ENCODE measurements at regions of chr12 and their contacts with region 1.

Region 1: GRCh38 chr12:47837190-47838171 is 17.8 kb upstream of the HDAC7 start:
- DNase-seq: peak; percentile 70 to 86
- H3K4me3 ChIP-seq: no peak overlapping the region
- H3K4me3 Mint-ChIP-seq: no peak overlapping the region
- H3K27ac Mint-ChIP-seq: no peak overlapping the region
- H3K4me1 ChIP-seq: peaks cover 5% of the 10 kb centered on the region; the same call in 1 of the 2 replicates
- H3K4me1 Mint-ChIP-seq: peaks cover 14% of the 10 kb centered on the region
- H3K27me3 ChIP-seq: no peaks in the 10 kb centered on the region
- H3K27me3 Mint-ChIP-seq: no peaks in the 10 kb centered on the region
- CTCF ChIP-seq: peak; percentile 93 to 96

Region 2: GRCh38 chr12:47715393-47715876 is 122.0 kb before region 1 on chr12:
- CTCF ChIA-PET with region 1: interaction called, 23 read pairs
- POLR2A ChIA-PET with region 1: no interaction called
- intact Hi-C with region 1: loop called (anchors 1 kb)
- DNase-seq: peak; percentile 79 to 81
- H3K4me3 ChIP-seq: no peak overlapping the region
- H3K4me3 Mint-ChIP-seq: no peak overlapping the region
- H3K27ac Mint-ChIP-seq: no peak overlapping the region
- H3K4me1 ChIP-seq: no peaks in the 10 kb centered on the region
- H3K4me1 Mint-ChIP-seq: no peaks in the 10 kb centered on the region
- H3K27me3 ChIP-seq: no peaks in the 10 kb centered on the region
- H3K27me3 Mint-ChIP-seq: no peaks in the 10 kb centered on the region
- CTCF ChIP-seq: peak; percentile 88 to 92

Region 3: DNA sequence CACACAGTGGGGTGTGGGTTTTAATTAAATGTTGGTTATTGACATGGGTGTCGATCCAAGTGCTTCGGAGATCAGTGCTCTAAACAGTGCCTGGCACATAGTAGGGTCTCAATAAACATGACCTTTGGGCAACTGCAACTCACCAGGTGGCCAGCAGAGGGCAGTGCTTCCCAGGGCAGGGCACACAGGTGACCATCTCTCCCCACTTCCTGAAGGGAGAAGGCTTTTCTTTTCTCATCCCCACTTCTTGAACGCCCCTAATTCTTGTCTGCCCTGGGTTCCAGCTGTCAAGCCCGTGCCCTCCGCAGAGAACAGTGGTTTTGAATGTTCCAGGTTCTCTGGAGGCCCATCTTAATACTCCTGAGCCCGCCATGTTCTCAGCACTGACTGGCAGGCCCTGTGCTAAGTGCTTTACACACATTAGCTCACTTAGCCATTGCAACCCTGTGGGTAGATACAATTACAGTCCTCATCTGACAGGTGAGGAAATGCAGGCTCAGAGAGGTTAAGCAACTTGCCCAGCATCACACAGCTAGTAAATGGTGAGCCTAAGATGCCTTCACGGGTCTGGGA is 95.1 kb before region 1 on chr12:
- CTCF ChIA-PET with region 1: interaction called, 65 read pairs
- POLR2A ChIA-PET with region 1: no interaction called
- intact Hi-C with region 1: loop called (anchors 1 kb)
- DNase-seq: peak; percentile 74 to 86
- H3K4me3 ChIP-seq: no peak overlapping the region
- H3K4me3 Mint-ChIP-seq: no peak overlapping the region
- H3K27ac Mint-ChIP-seq: no peak overlapping the region
- H3K4me1 ChIP-seq: peaks cover 5% of the 10 kb centered on the region; the same call in 1 of the 2 replicates
- H3K4me1 Mint-ChIP-seq: peaks cover 18% of the 10 kb centered on the region
- H3K27me3 ChIP-seq: no peaks in the 10 kb centered on the region
- H3K27me3 Mint-ChIP-seq: no peaks in the 10 kb centered on the region
- CTCF ChIP-seq: peak; percentile 94 to 99

Region 4: GRCh38 chr12:47779301-47779942 is 58.1 kb before region 1 on chr12:
- CTCF ChIA-PET with region 1: interaction called, 13 read pairs
- POLR2A ChIA-PET with region 1: no interaction called
- intact Hi-C with region 1: loop called (anchors 1 kb)
- DNase-seq: peak; percentile 88 to 94
- H3K4me3 ChIP-seq: no peak overlapping the region
- H3K4me3 Mint-ChIP-seq: no peak overlapping the region
- H3K27ac Mint-ChIP-seq: peak overlapping the region; percentile 34
- H3K4me1 ChIP-seq: peaks cover 9% of the 10 kb centered on the region; the same call in 1 of the 2 replicates
- H3K4me1 Mint-ChIP-seq: peaks cover 19% of the 10 kb centered on the region
- H3K27me3 ChIP-seq: no peaks in the 10 kb centered on the region
- H3K27me3 Mint-ChIP-seq: no peaks in the 10 kb centered on the region
- CTCF ChIP-seq: peak; percentile 97 to 99

Region 5: GRCh38 chr12:47797441-47797840 is 40.0 kb before region 1 on chr12:
- CTCF ChIA-PET with region 1: interaction called, 101 read pairs
- POLR2A ChIA-PET with region 1: no interaction called
- intact Hi-C with region 1: loop called (anchors 1 kb)
- DNase-seq: peak in 1 of 2 experiments; percentile 66
- H3K4me3 ChIP-seq: no peak overlapping the region
- H3K4me3 Mint-ChIP-seq: no peak overlapping the region
- H3K27ac Mint-ChIP-seq: no peak overlapping the region
- H3K4me1 ChIP-seq: no peaks in the 10 kb centered on the region
- H3K4me1 Mint-ChIP-seq: no peaks in the 10 kb centered on the region
- H3K27me3 ChIP-seq: no peaks in the 10 kb centered on the region
- H3K27me3 Mint-ChIP-seq: no peaks in the 10 kb centered on the region
- CTCF ChIP-seq: peak; percentile 31 to 68

Region 6: DNA sequence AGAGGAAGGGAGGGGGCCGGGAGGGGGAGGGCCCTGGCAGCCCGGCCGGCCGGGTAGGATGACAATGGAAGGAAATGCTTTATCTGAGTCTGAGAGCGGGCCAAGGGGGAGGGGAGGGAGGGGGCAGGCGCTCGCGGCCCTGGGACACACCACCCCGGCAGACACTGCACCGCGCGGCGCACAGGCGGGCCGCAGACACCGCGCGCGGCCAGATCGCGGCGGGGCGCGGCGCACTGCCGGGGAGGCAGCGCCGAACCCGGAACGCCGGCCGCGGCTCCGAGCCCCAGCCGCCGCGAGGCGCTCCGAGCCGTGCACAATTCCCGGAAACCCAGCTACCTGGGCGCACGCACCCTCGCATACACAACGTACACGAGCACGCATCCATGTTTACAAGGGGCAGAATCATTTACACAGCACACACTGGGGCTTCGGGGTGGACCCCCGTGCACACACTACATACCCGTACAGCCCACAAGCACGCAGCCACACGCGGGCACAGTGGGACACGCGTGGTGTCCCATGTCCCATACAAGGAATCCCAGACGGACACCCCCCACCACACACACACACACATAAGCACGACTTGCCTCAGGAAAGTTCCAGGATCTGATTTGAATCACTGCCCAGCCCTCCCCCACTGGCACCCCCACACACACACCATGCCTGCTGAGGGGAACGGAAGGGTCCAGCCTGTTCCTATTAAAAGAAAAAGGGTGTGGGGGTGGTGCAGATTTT is 17.4 kb before region 1 on chr12 and contains the start of gene HDAC7:
- CTCF ChIA-PET with region 1: interaction called, 113 read pairs
- POLR2A ChIA-PET with region 1: interaction called, 18 read pairs
- intact Hi-C with region 1: loop called (anchors 1 kb)
- DNase-seq: peak; percentile 82 to 90
- H3K4me3 ChIP-seq: peak within 1 kb of the TSS; percentile 92
- H3K4me3 Mint-ChIP-seq: peak within 1 kb of the TSS; percentile 97
- H3K27ac Mint-ChIP-seq: peak within 1 kb of the TSS; percentile 99
- H3K4me1 ChIP-seq: peaks cover 56% of the 10 kb centered on the region
- H3K4me1 Mint-ChIP-seq: peaks cover 59% of the 10 kb centered on the region
- H3K27me3 ChIP-seq: no peaks in the 10 kb centered on the region
- H3K27me3 Mint-ChIP-seq: no peaks in the 10 kb centered on the region
- CTCF ChIP-seq: no peak
- total RNA-seq, gene HDAC7: 71.2 and 71.9 TPM in 2 replicates

Measured in Caco-2 (cell line).